ENCODE measurements at regions of chr9 and their contacts with region 1.

Region 1: DNA sequence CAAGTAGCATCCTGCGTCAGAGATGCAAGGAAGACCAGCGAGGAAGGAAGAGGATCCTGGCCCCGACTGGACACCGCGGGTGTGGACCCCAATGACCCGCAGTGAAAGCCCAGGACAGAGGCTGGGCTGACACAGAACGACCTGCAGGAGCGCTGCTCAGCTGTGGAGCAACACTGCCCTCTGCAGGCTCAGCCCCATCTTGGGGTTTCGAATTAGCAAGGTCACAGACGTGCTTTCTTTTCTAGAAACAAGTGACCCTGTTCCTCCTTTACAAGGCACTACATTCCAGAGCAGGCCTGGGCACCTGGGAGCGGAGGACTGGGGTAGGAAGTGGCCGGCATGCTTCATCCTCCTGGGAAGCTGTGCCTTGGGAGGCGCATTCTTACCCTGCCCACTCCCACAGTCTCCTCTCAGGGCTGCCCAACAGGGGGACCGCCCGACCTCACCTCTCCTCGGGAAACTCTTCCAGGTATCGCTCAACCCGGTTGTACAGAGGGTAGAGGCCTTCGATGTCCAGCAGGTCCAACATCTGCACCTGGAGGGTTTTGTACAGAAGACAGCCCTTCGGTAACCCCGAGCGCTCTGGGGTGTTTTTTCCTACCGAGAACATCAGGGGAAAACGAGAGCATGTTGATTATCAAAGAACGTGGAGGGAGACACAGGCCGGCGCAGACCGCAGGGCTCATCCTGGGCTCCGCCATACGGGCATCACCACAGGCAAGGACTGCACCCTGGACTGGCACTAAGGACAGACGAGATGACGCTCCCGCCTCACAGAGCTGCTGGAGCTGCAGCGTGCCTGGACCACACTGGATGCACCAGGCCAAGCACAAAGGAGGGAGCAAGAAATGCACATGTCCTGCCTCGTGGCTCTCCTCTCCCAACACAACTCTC is 35.0 kb downstream of the IPPK start:
- DNase-seq: peak; percentile 77
- H3K4me3 ChIP-seq: no peak overlapping the region
- H3K27ac ChIP-seq: no peak overlapping the region
- H3K4me1 ChIP-seq: peaks cover 0 to 2% (median 0%) of the 10 kb centered on the region in 4 donors
- H3K27me3 ChIP-seq: no peaks in the 10 kb centered on the region
- CTCF ChIP-seq: peak; percentile 88 to 95 (median 93)
- EP300 ChIP-seq: no peak
- POLR2A ChIP-seq: no peak

Region 2: GRCh38 chr9:91503673-91504081 is 1131.3 kb before region 1 on chr9:
- in situ Hi-C with region 1: no loop called
- intact Hi-C with region 1: no loop called
- DNase-seq: no peak
- H3K4me3 ChIP-seq: no peak overlapping the region
- H3K27ac ChIP-seq: no peak overlapping the region
- H3K4me1 ChIP-seq: no peaks in the 10 kb centered on the region
- H3K27me3 ChIP-seq: no peaks in the 10 kb centered on the region
- CTCF ChIP-seq: no peak
- EP300 ChIP-seq: no peak
- POLR2A ChIP-seq: no peak

Region 3: DNA sequence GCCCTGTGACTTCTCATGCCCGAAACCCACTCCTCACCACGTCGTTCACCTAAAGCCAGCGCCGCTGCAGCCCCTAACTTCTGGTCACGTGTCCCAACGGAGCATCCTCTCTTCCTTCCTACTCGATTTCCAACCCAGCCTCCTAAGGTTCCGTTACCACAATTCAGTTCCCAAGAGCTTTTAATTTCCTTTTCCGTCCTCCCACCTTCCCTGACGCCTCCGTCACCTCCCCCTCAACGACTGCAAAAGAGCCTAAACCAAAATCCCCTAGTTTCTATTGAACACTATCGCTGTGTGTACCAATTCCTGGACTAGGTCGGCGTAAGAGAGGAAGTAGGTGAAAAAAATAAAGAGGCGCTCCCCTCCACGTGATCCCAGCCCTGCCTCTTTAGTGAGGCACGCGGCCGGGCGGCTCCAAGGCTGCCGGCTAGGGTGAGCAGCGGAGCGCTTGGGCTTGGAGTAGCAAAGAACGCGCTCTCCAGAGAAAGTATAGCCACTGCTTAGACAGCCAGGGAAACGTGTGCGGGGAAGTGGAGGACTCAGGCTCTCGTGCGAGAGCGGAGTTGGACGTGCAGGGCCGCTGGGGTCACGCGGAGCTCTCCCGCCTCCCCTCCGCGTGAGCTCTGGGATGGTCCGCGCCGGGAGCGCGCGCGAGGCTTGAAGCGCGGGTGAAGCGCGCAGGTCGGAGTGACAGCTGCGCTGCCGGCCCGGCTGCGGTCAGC is 309.5 kb before region 1 on chr9 and contains the starts of genes CENPP and NOL8:
- in situ Hi-C with region 1: loop called in 2 of 4 experiments (anchors 10 to 25 kb)
- intact Hi-C with region 1: loop called (anchors 5 kb)
- DNase-seq: peak; percentile 86
- H3K4me3 ChIP-seq: peak within 1 kb of the TSS; percentile 58 to 91 (median 73)
- H3K27ac ChIP-seq: peak within 1 kb of the TSS; percentile 90 to 95 (median 92)
- H3K4me1 ChIP-seq: peaks cover 11 to 26% (median 16%) of the 10 kb centered on the region in 4 donors
- H3K27me3 ChIP-seq: no peaks in the 10 kb centered on the region
- CTCF ChIP-seq: peak in 1 of 5 experiments; percentile 6
- EP300 ChIP-seq: no peak
- POLR2A ChIP-seq: peak; percentile 35
- total RNA-seq, gene CENPP: 0.37 to 7.1 (median 3.2) TPM
- total RNA-seq, gene NOL8: 17.6 to 86.2 (median 24.3) TPM

Region 4: DNA sequence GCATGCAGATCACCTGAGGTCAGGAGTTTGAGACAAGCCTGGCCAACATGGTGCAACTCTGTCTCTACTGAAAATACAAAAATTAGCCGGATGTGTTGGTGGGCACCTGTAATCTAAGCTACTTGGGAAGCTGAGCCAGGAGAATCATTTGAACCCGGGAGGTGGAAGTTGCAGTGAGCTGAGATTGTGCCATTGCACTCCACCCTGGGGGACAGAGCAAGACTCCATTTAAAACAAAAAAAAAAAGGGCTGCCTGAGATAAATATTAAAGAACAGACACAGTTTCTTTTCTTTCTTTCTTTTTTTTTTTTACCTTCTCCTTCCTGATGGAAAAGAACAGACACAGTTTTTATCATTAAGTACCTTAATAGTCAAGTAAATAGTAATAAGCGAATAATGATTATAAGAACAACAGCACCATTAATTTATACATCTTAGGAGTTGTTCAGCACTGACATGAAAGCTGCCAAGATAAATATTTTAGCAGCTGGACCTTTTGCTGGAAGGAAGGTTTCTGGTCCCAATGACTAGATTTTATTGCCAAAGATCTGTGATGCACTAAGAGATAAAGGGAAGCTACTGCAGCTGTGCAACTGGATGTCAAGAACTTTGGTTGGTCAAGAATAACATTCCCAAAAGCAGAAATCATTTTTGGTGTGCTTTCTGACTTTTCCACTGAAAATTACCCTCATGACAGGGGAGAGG is 302.2 kb before region 1 on chr9:
- in situ Hi-C with region 1: loop called in 1 of 4 experiments (anchors 10 kb)
- intact Hi-C with region 1: loop called (anchors 5 kb)
- DNase-seq: no peak
- H3K4me3 ChIP-seq: no peak overlapping the region
- H3K27ac ChIP-seq: no peak overlapping the region
- H3K4me1 ChIP-seq: no peaks in the 10 kb centered on the region
- H3K27me3 ChIP-seq: no peaks in the 10 kb centered on the region
- CTCF ChIP-seq: no peak
- EP300 ChIP-seq: no peak
- POLR2A ChIP-seq: no peak

Region 5: GRCh38 chr9:92342825-92343488 is 292.0 kb before region 1 on chr9:
- in situ Hi-C with region 1: loop called in 2 of 4 experiments (anchors 10 kb)
- intact Hi-C with region 1: no loop called
- DNase-seq: no peak
- H3K4me3 ChIP-seq: no peak overlapping the region
- H3K27ac ChIP-seq: no peak overlapping the region
- H3K4me1 ChIP-seq: peaks cover 0 to 12% (median 0%) of the 10 kb centered on the region in 4 donors
- H3K27me3 ChIP-seq: no peaks in the 10 kb centered on the region
- CTCF ChIP-seq: peak; percentile 23 to 41 (median 32)
- EP300 ChIP-seq: no peak
- POLR2A ChIP-seq: no peak

Region 6: GRCh38 chr9:92501671-92502393 is 133.1 kb before region 1 on chr9:
- in situ Hi-C with region 1: loop called in 1 of 4 experiments (anchors 10 kb)
- intact Hi-C with region 1: no loop called
- DNase-seq: peak; percentile 26
- H3K4me3 ChIP-seq: no peak overlapping the region
- H3K27ac ChIP-seq: peak overlapping the region; percentile 52 to 75 (median 60)
- H3K4me1 ChIP-seq: peaks cover 4 to 21% (median 4%) of the 10 kb centered on the region in 4 donors
- H3K27me3 ChIP-seq: no peaks in the 10 kb centered on the region
- CTCF ChIP-seq: peak; percentile 36 to 48 (median 42)
- EP300 ChIP-seq: no peak
- POLR2A ChIP-seq: no peak